ENCODE measurements at regions of chr1 and their contacts with region 1.

Region 1: GRCh38 chr1:32400876-32401631 is 6.8 kb upstream of the BSDC1 start:
- DNase-seq: peak; percentile 96

Region 2: GRCh38 chr1:32221980-32222755 is 178.9 kb before region 1 on chr1 and contains the starts of genes EIF3I and TMEM234:
- CTCF ChIA-PET with region 1: no interaction called
- POLR2A ChIA-PET with region 1: no interaction called
- DNase-seq: peak; percentile 100

Region 3: GRCh38 chr1:32291708-32292492 is 109.2 kb before region 1 on chr1 and contains the start of gene HDAC1:
- CTCF ChIA-PET with region 1: no interaction called
- POLR2A ChIA-PET with region 1: no interaction called
- DNase-seq: peak; percentile 100

Region 4: GRCh38 chr1:32413507-32414185 is 12.6 kb after region 1 on chr1:
- CTCF ChIA-PET with region 1: interaction called, 16 read pairs
- POLR2A ChIA-PET with region 1: no interaction called
- DNase-seq: peak; percentile 83